Activated CD8-positive, alpha-beta memory T cell treated with anti-CD3 and anti-CD28 coated beads, Interleukin-2, amount 10 ng/mL, durations not matched to agents 7 days and 5 days (primary cell): ENCODE measurements at regions of chr17 and their contacts with region 1.

Region 1: DNA sequence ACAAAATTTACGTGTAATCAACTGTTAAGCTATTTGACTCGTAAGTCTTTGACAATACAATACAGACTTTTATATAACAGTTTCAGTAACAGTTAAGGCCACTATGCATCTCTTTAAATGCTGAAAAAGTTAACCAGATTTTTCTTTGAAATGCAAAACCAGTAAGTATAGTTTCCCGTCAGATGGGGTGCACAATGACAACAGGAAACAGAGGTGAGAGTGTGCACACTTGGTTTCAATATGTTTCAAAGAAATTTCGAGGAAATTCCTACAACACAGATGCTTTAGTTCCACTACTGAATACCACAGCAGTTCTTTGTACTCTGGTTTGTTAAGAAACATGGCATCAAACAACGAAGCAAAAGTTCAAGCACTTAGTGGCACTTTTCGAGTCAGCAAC is 48.4 kb downstream of the RNF157 start:
- DNase-seq: peak; percentile 76
- ATAC-seq: peak; percentile 87
- H3K4me3 Mint-ChIP-seq: peak overlapping the region; percentile 56
- H3K27ac Mint-ChIP-seq: peak overlapping the region; percentile 96
- H3K4me1 Mint-ChIP-seq: peaks cover 77% of the 10 kb centered on the region
- H3K27me3 Mint-ChIP-seq: no peaks in the 10 kb centered on the region

Region 2: DNA sequence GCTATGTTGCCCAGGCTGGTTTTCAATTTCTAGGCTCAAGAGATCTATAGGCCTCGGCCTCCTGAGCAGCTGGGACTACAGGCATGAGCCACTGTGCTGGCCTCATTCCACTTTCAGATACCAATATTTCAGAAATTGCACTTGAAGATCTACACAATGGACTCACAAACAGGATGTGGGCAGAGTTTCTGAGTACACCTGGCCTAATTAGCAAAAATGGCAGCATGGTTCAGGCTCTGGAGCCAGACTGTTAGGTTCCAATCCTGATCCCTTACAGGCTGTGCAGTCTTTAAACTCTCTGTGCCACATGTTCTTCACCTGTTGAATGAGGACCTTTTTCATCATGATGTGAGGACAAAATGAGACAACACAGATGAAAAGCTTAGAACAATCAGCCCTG is 16.2 kb after region 1 on chr17:
- CTCF ChIA-PET with region 1: interaction called, 15 read pairs
- DNase-seq: peak; percentile 67
- ATAC-seq: peak; percentile 81
- H3K4me3 Mint-ChIP-seq: no peak overlapping the region
- H3K27ac Mint-ChIP-seq: peak overlapping the region; percentile 86
- H3K4me1 Mint-ChIP-seq: peaks cover 67% of the 10 kb centered on the region
- H3K27me3 Mint-ChIP-seq: no peaks in the 10 kb centered on the region

Region 3: GRCh38 chr17:76246080-76247066 is 54.5 kb after region 1 on chr17:
- CTCF ChIA-PET with region 1: interaction called, 16 read pairs
- DNase-seq: peak; percentile 94
- ATAC-seq: peak; percentile 98
- H3K4me3 Mint-ChIP-seq: peak overlapping the region; percentile 50
- H3K27ac Mint-ChIP-seq: peak overlapping the region; percentile 90
- H3K4me1 Mint-ChIP-seq: peaks cover 73% of the 10 kb centered on the region
- H3K27me3 Mint-ChIP-seq: no peaks in the 10 kb centered on the region

Region 4: GRCh38 chr17:76264755-76265596 is 73.1 kb after region 1 on chr17 and contains the start of gene UBALD2:
- CTCF ChIA-PET with region 1: interaction called, 12 read pairs
- DNase-seq: peak; percentile 100
- ATAC-seq: peak; percentile 82
- H3K4me3 Mint-ChIP-seq: peak within 1 kb of the TSS; percentile 92
- H3K27ac Mint-ChIP-seq: peak within 1 kb of the TSS; percentile 99
- H3K4me1 Mint-ChIP-seq: peaks cover 54% of the 10 kb centered on the region
- H3K27me3 Mint-ChIP-seq: no peaks in the 10 kb centered on the region
- total RNA-seq, gene UBALD2: 260 to 406 TPM

Region 5: DNA sequence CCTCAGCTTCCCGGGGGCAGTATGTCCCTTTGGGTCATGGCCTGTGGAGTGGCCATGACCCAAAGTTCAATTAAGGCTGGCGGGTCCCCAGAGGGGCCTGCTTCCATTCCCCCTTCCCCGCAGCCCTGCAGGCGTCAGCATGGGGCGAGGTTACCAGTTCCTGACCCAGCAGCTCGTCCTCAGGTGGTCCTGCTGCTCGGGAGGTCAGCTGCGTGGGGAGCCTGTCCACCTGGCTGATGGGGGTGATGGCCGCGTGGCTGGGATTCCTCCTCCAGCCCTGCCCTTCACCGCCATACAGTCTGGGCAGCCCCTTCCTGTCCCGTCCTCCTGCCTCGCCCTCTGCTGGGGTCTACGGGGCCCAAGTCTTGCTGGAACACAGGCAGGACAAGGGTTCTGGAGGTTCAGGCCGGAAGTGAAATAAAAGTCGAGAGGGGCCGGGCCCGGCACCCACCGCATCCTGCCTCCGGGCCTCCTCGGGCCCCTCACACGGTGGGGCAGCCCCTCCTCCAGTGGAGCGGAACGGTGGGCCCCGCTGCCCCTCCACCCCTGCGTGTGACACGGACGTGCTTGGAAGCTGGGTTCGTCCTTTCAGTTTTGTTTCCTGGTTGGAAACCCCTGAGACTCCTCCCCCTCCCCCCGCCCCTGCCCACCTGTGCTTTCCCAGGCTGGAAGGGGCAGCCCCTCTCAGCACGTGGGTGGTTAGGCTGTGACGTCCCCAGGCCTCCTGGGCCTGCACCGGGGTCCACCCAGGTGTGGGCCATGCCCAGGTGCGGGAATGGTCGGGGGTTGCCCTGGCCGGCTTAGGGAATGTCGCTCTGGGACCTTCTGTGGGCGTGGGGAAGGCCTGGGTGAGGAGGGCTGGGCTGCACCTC is 80.0 kb after region 1 on chr17:
- CTCF ChIA-PET with region 1: interaction called, 10 read pairs
- DNase-seq: peak; percentile 95
- ATAC-seq: peak; percentile 59
- H3K4me3 Mint-ChIP-seq: peak overlapping the region; percentile 92
- H3K27ac Mint-ChIP-seq: peak overlapping the region; percentile 99
- H3K4me1 Mint-ChIP-seq: peaks cover 51% of the 10 kb centered on the region
- H3K27me3 Mint-ChIP-seq: no peaks in the 10 kb centered on the region

Region 6: DNA sequence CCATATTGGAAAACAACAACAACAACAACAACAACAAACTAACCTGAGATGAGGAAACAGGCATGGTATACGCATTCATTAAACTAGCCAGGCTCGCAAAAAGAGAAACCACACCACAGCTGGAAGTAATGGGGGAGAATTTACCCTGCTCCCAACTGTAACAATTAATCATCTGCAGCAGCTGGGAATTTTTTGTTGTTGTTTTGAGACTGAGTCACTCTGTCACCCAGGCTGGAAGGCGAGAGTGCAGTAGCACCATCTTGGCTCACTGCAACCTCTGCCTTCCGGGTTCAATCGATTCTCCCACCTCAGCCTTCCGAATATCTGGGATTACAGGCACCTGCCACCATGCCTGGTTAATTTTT is 145.5 kb after region 1 on chr17:
- CTCF ChIA-PET with region 1: no interaction called
- DNase-seq: no peak
- ATAC-seq: no peak
- H3K4me3 Mint-ChIP-seq: no peak overlapping the region
- H3K27ac Mint-ChIP-seq: no peak overlapping the region
- H3K4me1 Mint-ChIP-seq: peaks cover 6% of the 10 kb centered on the region
- H3K27me3 Mint-ChIP-seq: no peaks in the 10 kb centered on the region